Aorta (tissue), 5 donors: ENCODE measurements at regions of chr7 and their contacts with region 1.

Region 1: GRCh38 chr7:127699852-127700251 is 47.9 kb downstream of the SND1 start:
- DNase-seq: no peak
- ATAC-seq: no peak
- H3K4me3 ChIP-seq: no peak overlapping the region
- H3K27ac ChIP-seq: no peak overlapping the region
- H3K4me1 ChIP-seq: peaks cover 0 to 1% of the 10 kb centered on the region in 2 donors
- H3K27me3 ChIP-seq: no peaks in the 10 kb centered on the region

Region 2: GRCh38 chr7:127667017-127667670 is 32.7 kb before region 1 on chr7:
- intact Hi-C with region 1: loop called in 1 of 2 experiments (anchors 1 kb)
- DNase-seq: no peak
- ATAC-seq: no peak
- H3K4me3 ChIP-seq: no peak overlapping the region
- H3K27ac ChIP-seq: no peak overlapping the region
- H3K4me1 ChIP-seq: peaks cover 0 to 7% of the 10 kb centered on the region in 2 donors
- H3K27me3 ChIP-seq: no peaks in the 10 kb centered on the region